ENCODE measurements at regions of chr2 and their contacts with region 1.

Region 1: DNA sequence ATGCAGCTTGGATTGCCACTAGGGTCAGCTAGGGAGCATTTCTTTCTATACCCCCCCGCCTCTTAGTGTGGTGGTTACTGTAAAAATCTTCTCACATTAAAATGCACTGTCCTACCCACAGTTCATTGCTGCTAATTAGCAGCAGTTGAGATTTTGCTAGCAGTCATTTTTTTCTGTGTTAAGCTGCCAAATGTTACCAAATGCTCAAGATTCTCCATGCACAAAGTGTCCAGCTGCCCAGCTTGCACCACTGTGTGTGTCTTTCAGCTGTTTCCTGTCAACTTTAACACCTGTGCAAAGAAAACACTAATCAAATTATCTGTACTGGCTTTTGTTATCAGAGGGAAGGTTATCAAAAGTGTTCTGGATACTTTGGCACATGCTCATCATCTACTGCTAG is 679.3 kb downstream of the NR4A2 start:
- DNase-seq: no peak
- ATAC-seq: no peak
- H3K4me3 ChIP-seq: no peak overlapping the region
- H3K27ac ChIP-seq: no peak overlapping the region
- H3K4me1 ChIP-seq: no peaks in the 10 kb centered on the region
- H3K27me3 ChIP-seq: no peaks in the 10 kb centered on the region
- CTCF ChIP-seq: no peak
- EP300 ChIP-seq: no peak
- POLR2A ChIP-seq: no peak
- RAD21 ChIP-seq: no peak

Region 2: GRCh38 chr2:154240921-154241379 is 1412.2 kb before region 1 on chr2:
- CTCF ChIA-PET with region 1: no interaction called
- POLR2A ChIA-PET with region 1: no interaction called
- in situ Hi-C with region 1: no loop called
- intact Hi-C with region 1: loop called (anchors 10 kb)
- DNase-seq: no peak
- ATAC-seq: peak; percentile 55
- H3K4me3 ChIP-seq: no peak overlapping the region; a peak in 1 of 6 replicates
- H3K27ac ChIP-seq: no peak overlapping the region
- H3K4me1 ChIP-seq: no peaks in the 10 kb centered on the region
- H3K27me3 ChIP-seq: no peaks in the 10 kb centered on the region
- CTCF ChIP-seq: no peak
- EP300 ChIP-seq: no peak
- POLR2A ChIP-seq: no peak
- RAD21 ChIP-seq: no peak

Region 3: GRCh38 chr2:154568413-154568812 is 1084.8 kb before region 1 on chr2:
- CTCF ChIA-PET with region 1: no interaction called
- POLR2A ChIA-PET with region 1: no interaction called
- in situ Hi-C with region 1: no loop called
- intact Hi-C with region 1: no loop called
- DNase-seq: no peak
- ATAC-seq: no peak
- H3K4me3 ChIP-seq: no peak overlapping the region
- H3K27ac ChIP-seq: no peak overlapping the region
- H3K4me1 ChIP-seq: no peaks in the 10 kb centered on the region
- H3K27me3 ChIP-seq: no peaks in the 10 kb centered on the region
- CTCF ChIP-seq: no peak
- EP300 ChIP-seq: no peak
- POLR2A ChIP-seq: no peak
- RAD21 ChIP-seq: no peak

Region 4: GRCh38 chr2:155690785-155691184 is 37.6 kb after region 1 on chr2:
- CTCF ChIA-PET with region 1: no interaction called
- POLR2A ChIA-PET with region 1: no interaction called
- in situ Hi-C with region 1: no loop called
- intact Hi-C with region 1: no loop called
- DNase-seq: no peak
- ATAC-seq: no peak
- H3K4me3 ChIP-seq: no peak overlapping the region
- H3K27ac ChIP-seq: no peak overlapping the region
- H3K4me1 ChIP-seq: no peaks in the 10 kb centered on the region
- H3K27me3 ChIP-seq: no peaks in the 10 kb centered on the region
- CTCF ChIP-seq: no peak
- EP300 ChIP-seq: no peak
- POLR2A ChIP-seq: no peak
- RAD21 ChIP-seq: no peak

Region 5: DNA sequence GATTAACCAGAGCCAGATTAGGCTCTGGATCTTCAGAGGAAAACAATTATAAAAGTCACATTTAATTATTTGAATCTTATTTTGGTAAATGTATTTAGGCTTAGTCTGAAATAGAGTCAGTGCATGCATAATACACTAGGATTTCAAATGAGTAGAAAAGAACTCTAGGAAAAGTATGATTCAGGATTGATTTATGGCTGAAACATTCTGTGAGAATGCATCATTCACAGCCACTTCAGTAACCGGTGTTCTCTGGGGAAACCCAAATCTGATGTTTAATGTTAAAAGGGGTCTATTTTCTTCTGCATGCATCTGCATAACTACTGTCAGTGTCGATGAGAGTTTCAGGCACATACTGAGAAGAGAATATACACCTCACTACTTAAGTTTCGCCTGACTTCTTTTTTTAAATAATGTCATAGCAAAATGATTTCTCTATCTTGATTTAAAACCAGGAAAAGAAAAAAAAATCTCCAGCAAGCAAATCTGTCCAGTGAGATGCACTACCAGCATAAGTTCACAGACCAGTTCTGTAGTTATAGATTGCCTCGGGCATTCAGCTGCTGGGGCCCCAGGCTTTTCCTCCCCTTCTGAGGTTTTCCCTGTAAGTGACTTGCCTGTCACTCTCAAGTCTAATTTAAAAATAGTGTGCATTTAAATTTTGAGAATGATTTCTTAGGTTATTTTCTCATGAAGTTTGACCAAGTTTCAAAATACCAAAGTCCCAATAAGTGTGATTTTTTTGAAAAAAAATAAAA is 177.8 kb after region 1 on chr2:
- CTCF ChIA-PET with region 1: no interaction called
- POLR2A ChIA-PET with region 1: no interaction called
- in situ Hi-C with region 1: no loop called
- intact Hi-C with region 1: no loop called
- DNase-seq: no peak
- ATAC-seq: no peak
- H3K4me3 ChIP-seq: no peak overlapping the region
- H3K27ac ChIP-seq: no peak overlapping the region
- H3K4me1 ChIP-seq: no peaks in the 10 kb centered on the region
- H3K27me3 ChIP-seq: no peaks in the 10 kb centered on the region; a peak in 1 of 5 replicates
- CTCF ChIP-seq: no peak
- EP300 ChIP-seq: no peak
- POLR2A ChIP-seq: no peak
- RAD21 ChIP-seq: no peak